K562 (cell line): ENCODE measurements at regions of chr3 and their contacts with region 1.

Region 1: GRCh38 chr3:155178810-155179436 is 98.8 kb downstream of the MME start:
- DNase-seq: no peak
- ATAC-seq: peak; percentile 50
- H3K4me3 ChIP-seq: no peak overlapping the region
- H3K27ac ChIP-seq: no peak overlapping the region
- H3K4me1 ChIP-seq: peaks cover 4 to 18% of the 10 kb centered on the region in 2 experiments; a peak in 2 of 5 replicates
- H3K27me3 ChIP-seq: no peaks in the 10 kb centered on the region
- CTCF ChIP-seq: no peak
- EP300 ChIP-seq: no peak
- POLR2A ChIP-seq: no peak
- RAD21 ChIP-seq: peak in 1 of 2 experiments; percentile 29; a peak in 1 of 4 replicates

Region 2: DNA sequence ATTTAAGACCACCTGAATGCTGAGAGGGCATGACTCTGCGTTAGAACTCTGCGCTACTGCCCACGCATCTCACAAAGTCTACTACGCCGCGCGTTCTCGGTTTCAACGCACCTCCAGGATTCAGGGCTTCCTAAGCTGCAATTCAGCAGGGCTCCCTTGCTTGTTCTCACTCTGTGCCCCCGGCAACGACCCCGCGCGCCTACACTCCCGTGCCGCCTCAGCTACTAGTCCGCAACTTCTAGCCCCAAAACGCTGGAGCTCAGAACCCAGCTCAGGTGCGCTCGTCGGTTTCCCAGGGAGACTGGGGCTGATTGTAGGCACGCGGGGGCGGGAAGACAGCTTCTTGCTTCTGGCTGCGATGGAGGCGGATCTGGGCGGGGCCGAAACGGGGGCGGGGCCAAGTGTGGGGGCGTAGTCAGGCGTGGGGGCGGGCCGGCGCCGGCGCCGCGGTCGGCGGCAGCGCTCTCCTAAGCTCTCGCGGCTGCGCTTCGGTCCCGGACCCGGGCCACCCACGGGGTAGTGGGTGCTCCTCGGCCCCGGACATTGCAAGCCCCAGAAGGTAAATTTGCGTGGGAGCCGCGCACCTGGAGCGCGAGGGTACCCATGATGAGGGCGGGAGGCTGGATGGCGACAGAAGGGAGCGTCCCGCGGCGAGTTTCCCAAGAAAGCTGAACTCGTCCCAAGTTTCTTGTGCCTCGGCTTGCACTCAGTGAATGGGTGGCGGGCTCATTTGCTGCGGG is 1057.8 kb before region 1 on chr3 and contains the start of gene ARHGEF26:
- CTCF ChIA-PET with region 1: no interaction called
- POLR2A ChIA-PET with region 1: no interaction called
- in situ Hi-C with region 1: no loop called
- intact Hi-C with region 1: loop called (anchors 5 kb)
- DNase-seq: peak; percentile 84 to 96 (median 93)
- ATAC-seq: peak; percentile 99
- H3K4me3 ChIP-seq: peak within 1 kb of the TSS; percentile 51
- H3K27ac ChIP-seq: no peak within 1 kb of the TSS
- H3K4me1 ChIP-seq: peaks cover 5 to 16% of the 10 kb centered on the region in 2 experiments; a peak in 3 of 5 replicates
- H3K27me3 ChIP-seq: peaks cover 4 to 22% of the 10 kb centered on the region in 2 experiments; a peak in 3 of 5 replicates
- CTCF ChIP-seq: no peak
- EP300 ChIP-seq: no peak
- POLR2A ChIP-seq: no peak
- RAD21 ChIP-seq: no peak
- polyA plus RNA-seq, gene ARHGEF26: 0.01 to 0.04 TPM

Region 3: DNA sequence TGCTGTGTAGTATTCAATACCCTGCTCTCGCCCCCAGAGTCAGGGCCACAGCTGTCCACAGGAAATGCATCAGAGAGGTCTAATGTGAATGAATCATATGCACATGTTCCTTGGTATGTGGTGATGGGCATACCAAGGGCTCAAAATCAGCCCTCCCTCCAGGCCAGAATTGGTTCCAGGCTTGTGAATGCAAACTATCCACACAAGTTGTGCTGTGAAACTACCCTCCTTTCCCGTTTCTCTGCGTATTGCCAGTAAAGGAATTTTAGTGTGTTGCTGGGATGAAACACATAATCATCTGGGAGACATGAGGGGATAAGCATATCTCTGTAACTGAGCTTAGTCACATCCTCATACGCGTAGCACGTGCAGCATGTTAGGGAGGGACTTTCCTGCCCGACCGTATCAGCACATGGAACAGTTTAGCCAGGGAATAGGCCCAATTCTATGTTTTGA is 108.0 kb before region 1 on chr3:
- CTCF ChIA-PET with region 1: no interaction called
- POLR2A ChIA-PET with region 1: no interaction called
- in situ Hi-C with region 1: no loop called
- intact Hi-C with region 1: no loop called
- DNase-seq: peak in 2 of 4 experiments; percentile 11 to 20
- ATAC-seq: peak; percentile 49; the same call in 1 of the 3 replicates
- H3K4me3 ChIP-seq: no peak overlapping the region
- H3K27ac ChIP-seq: no peak overlapping the region
- H3K4me1 ChIP-seq: peaks cover 0 to 6% of the 10 kb centered on the region in 2 experiments; a peak in 1 of 5 replicates
- H3K27me3 ChIP-seq: no peaks in the 10 kb centered on the region
- CTCF ChIP-seq: no peak
- EP300 ChIP-seq: no peak
- POLR2A ChIP-seq: no peak
- RAD21 ChIP-seq: 0 out of 4 replicates have a peak, but pooled peaks of 1 of the 2 experiments have one; percentile 8

Region 4: DNA sequence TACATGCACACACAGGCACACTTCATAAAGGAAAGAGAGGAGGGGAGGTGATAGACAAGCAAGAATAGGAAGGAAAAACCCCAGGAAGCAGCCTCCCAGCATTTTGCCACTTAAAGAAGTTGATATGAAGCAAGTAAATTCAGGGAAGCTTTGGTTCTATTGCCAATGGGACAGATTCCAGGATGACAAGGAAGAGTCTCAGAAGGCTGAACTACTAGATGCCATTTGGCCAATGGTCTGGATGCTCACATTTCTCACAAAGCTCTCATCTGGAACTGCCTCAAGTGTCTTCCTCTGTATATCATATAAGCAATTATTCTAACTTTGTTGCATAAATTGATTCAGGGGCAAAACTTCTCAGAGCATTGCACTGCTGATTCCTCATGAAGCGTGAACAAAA is 193.4 kb after region 1 on chr3:
- CTCF ChIA-PET with region 1: no interaction called
- POLR2A ChIA-PET with region 1: no interaction called
- in situ Hi-C with region 1: no loop called
- intact Hi-C with region 1: no loop called
- DNase-seq: no peak
- ATAC-seq: no peak
- H3K4me3 ChIP-seq: no peak overlapping the region
- H3K27ac ChIP-seq: no peak overlapping the region
- H3K4me1 ChIP-seq: peaks cover 0 to 12% of the 10 kb centered on the region in 2 experiments; a peak in 3 of 5 replicates
- H3K27me3 ChIP-seq: no peaks in the 10 kb centered on the region
- CTCF ChIP-seq: no peak
- EP300 ChIP-seq: no peak
- POLR2A ChIP-seq: no peak
- RAD21 ChIP-seq: no peak